HepG2 (cell line): ENCODE measurements at regions of chrX and their contacts with region 1.

Region 1: GRCh38 chrX:15143050-15143824 is 126.6 kb downstream of the ASB9 start:
- DNase-seq: peak; percentile 45
- ATAC-seq: peak; percentile 89
- H3K4me3 ChIP-seq: 0 out of 6 replicates have a peak overlapping the region, but pooled peaks of 1 of the 3 experiments have one; percentile 12
- H3K27ac ChIP-seq: no peak overlapping the region
- H3K4me1 ChIP-seq: peaks cover 22% of the 10 kb centered on the region
- H3K27me3 ChIP-seq: no peaks in the 10 kb centered on the region
- CTCF ChIP-seq: peak; percentile 66
- EP300 ChIP-seq: no peak; a peak in 1 of 4 replicates
- POLR2A ChIP-seq: no peak
- RAD21 ChIP-seq: no peak

Region 2: GRCh38 chrX:14039344-14039743 is 1103.9 kb before region 1 on chrX:
- CTCF ChIA-PET with region 1: interaction called, 3 read pairs
- POLR2A ChIA-PET with region 1: no interaction called
- in situ Hi-C with region 1: no loop called
- intact Hi-C with region 1: loop called (anchors 2 kb)
- DNase-seq: peak; percentile 28
- ATAC-seq: peak; percentile 62; the same call in 2 of the 3 replicates
- H3K4me3 ChIP-seq: no peak overlapping the region
- H3K27ac ChIP-seq: no peak overlapping the region
- H3K4me1 ChIP-seq: peaks cover 12% of the 10 kb centered on the region; the same call in 1 of the 2 replicates
- H3K27me3 ChIP-seq: no peaks in the 10 kb centered on the region
- CTCF ChIP-seq: peak; percentile 60
- EP300 ChIP-seq: no peak
- POLR2A ChIP-seq: no peak
- RAD21 ChIP-seq: no peak

Region 3: DNA sequence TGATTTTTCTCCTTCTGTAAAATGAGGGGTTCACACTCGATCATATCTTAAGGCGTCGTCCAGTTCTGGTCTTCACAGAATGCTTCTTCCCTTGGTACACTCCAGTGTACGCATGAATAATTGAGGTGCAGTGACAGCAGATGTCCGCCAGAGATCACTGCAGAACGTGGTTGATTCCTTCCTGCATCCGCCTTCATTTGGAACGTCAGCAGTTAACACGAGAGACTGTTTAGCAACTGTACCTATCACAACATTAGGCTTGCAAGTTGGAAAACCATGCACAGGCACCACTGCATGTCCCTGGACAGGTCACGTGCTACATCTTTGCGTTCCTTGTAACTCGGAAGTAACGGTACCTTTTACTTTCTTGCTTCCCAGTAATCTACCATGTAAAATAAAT is 1047.5 kb before region 1 on chrX:
- CTCF ChIA-PET with region 1: interaction called, 4 read pairs
- POLR2A ChIA-PET with region 1: no interaction called
- in situ Hi-C with region 1: loop called (anchors 25 kb)
- intact Hi-C with region 1: loop called (anchors 1 kb)
- DNase-seq: peak; percentile 47
- ATAC-seq: peak; percentile 89
- H3K4me3 ChIP-seq: no peak overlapping the region; a peak in 1 of 6 replicates
- H3K27ac ChIP-seq: no peak overlapping the region
- H3K4me1 ChIP-seq: no peaks in the 10 kb centered on the region
- H3K27me3 ChIP-seq: no peaks in the 10 kb centered on the region; a peak in 1 of 5 replicates
- CTCF ChIP-seq: peak; percentile 83
- EP300 ChIP-seq: no peak
- POLR2A ChIP-seq: no peak
- RAD21 ChIP-seq: peak; percentile 47; the same call in 1 of the 2 replicates

Region 4: DNA sequence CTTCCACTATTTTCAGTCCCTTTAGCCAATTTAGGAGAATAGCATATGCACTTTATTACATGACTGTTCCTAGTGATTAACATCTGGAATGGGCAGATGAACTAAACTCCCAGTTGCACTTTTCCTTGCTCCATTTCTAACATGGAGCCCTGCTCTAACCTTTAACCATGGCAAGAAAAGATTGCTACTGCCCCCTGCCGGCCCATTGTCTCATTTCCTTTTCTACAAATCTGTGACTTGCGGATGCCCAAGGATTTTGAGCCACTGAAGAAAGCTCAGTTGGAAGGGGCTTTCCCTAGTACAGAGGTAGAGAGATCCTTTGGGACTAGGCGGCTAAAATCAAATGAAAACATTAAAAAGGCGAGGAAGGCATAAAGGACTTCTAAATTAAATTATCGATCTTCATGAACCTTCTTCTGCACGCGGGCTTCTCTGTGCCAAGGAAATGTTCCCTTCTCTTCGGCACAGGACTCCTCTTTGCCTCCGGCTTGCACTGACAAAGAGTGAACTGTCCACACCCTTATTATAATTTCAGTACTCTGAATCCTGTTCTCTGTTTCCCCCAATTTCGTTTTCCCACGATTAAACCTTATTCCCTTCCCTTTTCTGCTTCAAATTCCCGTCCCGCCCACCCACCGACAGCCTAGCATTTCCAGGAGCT is 614.5 kb before region 1 on chrX:
- CTCF ChIA-PET with region 1: no interaction called
- POLR2A ChIA-PET with region 1: no interaction called
- in situ Hi-C with region 1: no loop called
- intact Hi-C with region 1: loop called (anchors 10 kb)
- DNase-seq: peak; percentile 10
- ATAC-seq: peak; percentile 61
- H3K4me3 ChIP-seq: no peak overlapping the region
- H3K27ac ChIP-seq: no peak overlapping the region
- H3K4me1 ChIP-seq: no peaks in the 10 kb centered on the region
- H3K27me3 ChIP-seq: no peaks in the 10 kb centered on the region
- CTCF ChIP-seq: peak; percentile 51
- EP300 ChIP-seq: no peak
- POLR2A ChIP-seq: no peak
- RAD21 ChIP-seq: no peak

Region 5: GRCh38 chrX:14712102-14712501 is 431.1 kb before region 1 on chrX:
- CTCF ChIA-PET with region 1: no interaction called
- POLR2A ChIA-PET with region 1: no interaction called
- in situ Hi-C with region 1: no loop called
- intact Hi-C with region 1: loop called (anchors 5 kb)
- DNase-seq: peak; percentile 1
- ATAC-seq: no peak
- H3K4me3 ChIP-seq: no peak overlapping the region
- H3K27ac ChIP-seq: no peak overlapping the region
- H3K4me1 ChIP-seq: no peaks in the 10 kb centered on the region
- H3K27me3 ChIP-seq: no peaks in the 10 kb centered on the region
- CTCF ChIP-seq: 0 out of 2 replicates have a peak, but pooled peaks have one; percentile 7
- EP300 ChIP-seq: no peak
- POLR2A ChIP-seq: no peak
- RAD21 ChIP-seq: no peak

Region 6: GRCh38 chrX:14872851-14873675 is 270.2 kb before region 1 on chrX and contains the starts of genes FANCB and MOSPD2:
- CTCF ChIA-PET with region 1: no interaction called
- POLR2A ChIA-PET with region 1: no interaction called
- in situ Hi-C with region 1: no loop called
- intact Hi-C with region 1: loop called (anchors 1 kb)
- DNase-seq: peak; percentile 90
- ATAC-seq: peak; percentile 99
- H3K4me3 ChIP-seq: peak within 1 kb of the TSS; percentile 67 to 83 (median 82)
- H3K27ac ChIP-seq: peak within 1 kb of the TSS; percentile 73
- H3K4me1 ChIP-seq: peaks cover 10% of the 10 kb centered on the region; the same call in 1 of the 2 replicates
- H3K27me3 ChIP-seq: no peaks in the 10 kb centered on the region; a peak in 1 of 5 replicates
- CTCF ChIP-seq: no peak
- EP300 ChIP-seq: no peak
- POLR2A ChIP-seq: peak; percentile 53 to 60; a peak in 3 of 4 replicates
- RAD21 ChIP-seq: no peak
- total RNA-seq, gene FANCB: 5.8 and 9.2 TPM in 2 replicates
- total RNA-seq, gene MOSPD2: 7.0 and 11.3 TPM in 2 replicates

Region 7: DNA sequence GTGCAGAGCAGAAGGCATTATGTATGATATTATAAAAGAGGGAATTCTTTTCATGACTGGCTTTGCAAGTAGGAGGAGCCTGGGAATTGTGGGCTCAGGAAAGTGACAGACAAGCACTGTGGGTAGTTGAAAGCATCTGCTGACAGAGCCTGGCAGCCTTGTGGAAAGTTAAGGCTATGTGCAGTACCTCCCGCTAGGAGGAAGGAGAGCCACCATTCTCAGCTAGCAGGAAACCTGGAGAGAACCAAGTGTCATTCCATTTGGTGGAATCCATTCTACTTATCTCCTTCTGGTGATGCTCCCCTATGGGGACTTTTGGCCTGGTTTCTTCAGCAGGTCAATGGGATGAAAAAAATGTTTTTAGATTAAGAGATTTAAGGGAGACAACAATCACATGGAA is 44.8 kb after region 1 on chrX:
- CTCF ChIA-PET with region 1: no interaction called
- POLR2A ChIA-PET with region 1: no interaction called
- in situ Hi-C with region 1: no loop called
- intact Hi-C with region 1: no loop called
- DNase-seq: no peak
- ATAC-seq: peak; percentile 68; the same call in 2 of the 3 replicates
- H3K4me3 ChIP-seq: no peak overlapping the region
- H3K27ac ChIP-seq: no peak overlapping the region
- H3K4me1 ChIP-seq: no peaks in the 10 kb centered on the region
- H3K27me3 ChIP-seq: no peaks in the 10 kb centered on the region
- CTCF ChIP-seq: no peak
- EP300 ChIP-seq: no peak
- POLR2A ChIP-seq: no peak
- RAD21 ChIP-seq: no peak

Region 8: GRCh38 chrX:15242899-15243555 is 99.8 kb after region 1 on chrX:
- CTCF ChIA-PET with region 1: no interaction called
- POLR2A ChIA-PET with region 1: no interaction called
- in situ Hi-C with region 1: no loop called
- intact Hi-C with region 1: loop called (anchors 10 kb)
- DNase-seq: peak; percentile 12
- ATAC-seq: no peak
- H3K4me3 ChIP-seq: no peak overlapping the region
- H3K27ac ChIP-seq: no peak overlapping the region
- H3K4me1 ChIP-seq: no peaks in the 10 kb centered on the region
- H3K27me3 ChIP-seq: no peaks in the 10 kb centered on the region
- CTCF ChIP-seq: peak; percentile 44
- EP300 ChIP-seq: no peak
- POLR2A ChIP-seq: no peak
- RAD21 ChIP-seq: no peak